ENCODE measurements at regions of chr9 and their contacts with region 1.

Region 1: DNA sequence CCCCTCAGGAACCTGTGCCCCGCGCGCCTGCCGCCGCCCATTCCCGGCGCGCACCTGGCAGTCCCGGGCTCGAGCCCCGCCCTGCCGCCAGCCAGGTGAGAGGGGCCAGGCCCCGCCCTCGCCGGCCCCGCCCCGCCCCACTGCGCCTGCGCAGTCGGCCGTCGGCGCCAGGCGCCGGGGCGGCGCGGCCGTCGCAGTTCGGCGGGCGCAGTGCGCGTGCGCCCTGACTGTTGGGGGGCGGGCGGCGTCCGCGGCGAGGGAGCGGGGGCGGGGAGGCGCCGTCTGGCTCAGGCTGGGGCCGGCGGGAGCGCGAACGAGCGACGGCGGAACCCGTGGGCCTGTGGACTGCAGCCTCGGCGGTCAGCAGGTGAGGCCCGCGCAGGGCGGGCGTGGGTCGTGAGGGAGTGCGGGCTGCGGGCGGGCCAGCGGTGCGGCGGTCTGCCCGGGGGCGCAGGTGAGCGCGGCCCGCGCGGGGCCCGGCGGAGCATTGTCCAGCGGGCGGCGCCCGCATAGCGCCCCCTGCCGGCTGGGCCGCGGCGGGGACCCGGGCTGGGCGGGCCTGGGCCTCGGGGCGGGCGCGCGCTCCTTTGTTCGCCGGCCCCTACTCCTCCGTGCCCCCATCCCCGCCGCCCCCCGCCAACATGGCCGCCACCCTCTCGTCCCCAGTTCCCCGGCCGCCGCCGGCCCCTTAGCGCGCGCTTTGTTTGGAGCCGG is at the start of gene SPIN1:
- DNase-seq: peak in 1 of 2 experiments; percentile 95
- H3K4me3 ChIP-seq: peak within 1 kb of the TSS; percentile 99
- H3K27ac ChIP-seq: peak within 1 kb of the TSS; percentile 76
- H3K4me1 ChIP-seq: peaks cover 29% of the 10 kb centered on the region
- H3K27me3 ChIP-seq: no peaks in the 10 kb centered on the region
- CTCF ChIP-seq: no peak
- total RNA-seq, gene SPIN1: 102 and 112 TPM in 2 replicates

Region 2: GRCh38 chr9:87973730-87974292 is 414.5 kb before region 1 on chr9:
- CTCF ChIA-PET with region 1: no interaction called
- POLR2A ChIA-PET with region 1: no interaction called
- intact Hi-C with region 1: loop called (anchors 10 kb)
- DNase-seq: no peak
- H3K4me3 ChIP-seq: peak overlapping the region; percentile 86
- H3K27ac ChIP-seq: no peak overlapping the region
- H3K4me1 ChIP-seq: peaks cover 11% of the 10 kb centered on the region; the same call in 1 of the 2 replicates
- H3K27me3 ChIP-seq: no peaks in the 10 kb centered on the region
- CTCF ChIP-seq: no peak

Region 3: GRCh38 chr9:88173378-88173999 is 214.8 kb before region 1 on chr9:
- CTCF ChIA-PET with region 1: no interaction called
- POLR2A ChIA-PET with region 1: no interaction called
- intact Hi-C with region 1: loop called (anchors 1 kb)
- DNase-seq: peak; percentile 70 to 75
- H3K4me3 ChIP-seq: no peak overlapping the region
- H3K27ac ChIP-seq: no peak overlapping the region
- H3K4me1 ChIP-seq: no peaks in the 10 kb centered on the region
- H3K27me3 ChIP-seq: no peaks in the 10 kb centered on the region
- CTCF ChIP-seq: peak; percentile 88

Region 4: DNA sequence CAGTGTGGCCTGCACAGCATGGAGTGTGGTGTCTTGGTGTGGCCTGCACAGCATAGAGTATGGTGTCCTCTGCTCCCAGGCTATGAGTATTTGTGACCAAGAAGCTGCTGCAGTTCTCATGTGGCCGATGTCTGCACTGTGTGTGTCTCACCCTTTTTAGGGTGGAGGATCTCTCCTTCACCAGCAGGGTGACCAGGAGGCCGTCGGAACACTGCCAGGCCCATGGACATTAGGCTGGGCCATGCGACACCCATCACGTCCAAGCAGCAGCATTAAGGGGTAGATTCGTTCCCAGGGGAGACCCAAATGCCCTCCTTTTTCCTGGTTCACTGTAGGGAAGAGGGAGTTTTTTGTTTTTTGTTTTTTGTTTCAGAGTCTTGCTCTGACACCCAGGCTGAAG is 115.3 kb before region 1 on chr9:
- CTCF ChIA-PET with region 1: interaction called, 5 read pairs
- POLR2A ChIA-PET with region 1: no interaction called
- intact Hi-C with region 1: loop called (anchors 1 kb)
- DNase-seq: no peak
- H3K4me3 ChIP-seq: no peak overlapping the region
- H3K27ac ChIP-seq: no peak overlapping the region
- H3K4me1 ChIP-seq: peaks cover 36% of the 10 kb centered on the region
- H3K27me3 ChIP-seq: no peaks in the 10 kb centered on the region
- CTCF ChIP-seq: no peak

Region 5: GRCh38 chr9:88342246-88342645 is 46.1 kb before region 1 on chr9:
- CTCF ChIA-PET with region 1: interaction called, 4 read pairs
- POLR2A ChIA-PET with region 1: no interaction called
- intact Hi-C with region 1: loop called (anchors 1 kb)
- DNase-seq: no peak
- H3K4me3 ChIP-seq: no peak overlapping the region
- H3K27ac ChIP-seq: no peak overlapping the region
- H3K4me1 ChIP-seq: peaks cover 23% of the 10 kb centered on the region
- H3K27me3 ChIP-seq: no peaks in the 10 kb centered on the region
- CTCF ChIP-seq: no peak

Region 6: GRCh38 chr9:88447431-88447830 is 59.1 kb after region 1 on chr9:
- CTCF ChIA-PET with region 1: no interaction called
- POLR2A ChIA-PET with region 1: no interaction called
- intact Hi-C with region 1: no loop called
- DNase-seq: no peak
- H3K4me3 ChIP-seq: no peak overlapping the region
- H3K27ac ChIP-seq: no peak overlapping the region
- H3K4me1 ChIP-seq: no peaks in the 10 kb centered on the region
- H3K27me3 ChIP-seq: no peaks in the 10 kb centered on the region
- CTCF ChIP-seq: no peak